Dorsolateral prefrontal cortex (tissue), 120 donors: ENCODE measurements at regions of chr12 and their contacts with region 1.

Region 1: GRCh38 chr12:44076871-44077270 is 241.0 kb downstream of the TMEM117 start:
- DNase-seq: no peak
- H3K4me3 ChIP-seq: no peak overlapping the region
- H3K27ac ChIP-seq: peak overlapping the region in 16 of 59 donors; percentile 4 to 72 (median 30)
- H3K27me3 ChIP-seq: no peaks in the 10 kb centered on the region
- CTCF ChIP-seq: no peak

Region 2: DNA sequence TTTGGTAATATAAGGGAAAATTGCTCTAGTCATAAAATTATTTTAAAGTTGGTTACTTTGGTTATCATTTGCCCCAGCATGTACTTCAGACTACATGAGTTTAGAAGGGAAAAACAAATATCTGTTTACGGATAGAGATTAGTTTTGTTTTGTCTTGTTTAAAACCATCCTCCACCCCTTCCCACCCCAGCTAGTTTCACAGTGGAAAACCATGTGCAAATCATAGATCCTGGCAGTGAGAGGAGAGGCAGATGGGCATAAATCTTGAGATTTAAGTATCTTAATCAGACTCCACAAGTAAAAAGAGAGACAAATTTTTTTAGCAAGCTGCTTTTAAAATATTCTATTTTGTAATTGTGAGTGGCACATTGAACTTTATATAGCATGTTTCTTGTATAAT is 183.7 kb after region 1 on chr12:
- intact Hi-C with region 1: loop called in 1 of 2 experiments (anchors 5 kb)
- DNase-seq: no peak
- H3K4me3 ChIP-seq: no peak overlapping the region
- H3K27ac ChIP-seq: no peak overlapping the region
- H3K27me3 ChIP-seq: no peaks in the 10 kb centered on the region
- CTCF ChIP-seq: no peak